ENCODE measurements at regions of chr2 and their contacts with region 1.

Region 1: GRCh38 chr2:200888704-200889625 is at the starts of genes NIF3L1 and PPIL3:
- DNase-seq: peak; percentile 99
- H3K4me3 Mint-ChIP-seq: peak within 1 kb of the TSS; percentile 98
- H3K27ac Mint-ChIP-seq: peak within 1 kb of the TSS; percentile 100
- H3K4me1 Mint-ChIP-seq: peaks cover 44% of the 10 kb centered on the region
- H3K27me3 Mint-ChIP-seq: no peaks in the 10 kb centered on the region
- total RNA-seq, gene NIF3L1: 30.8 to 32.7 TPM
- total RNA-seq, gene PPIL3: 84.0 to 87.9 TPM

Region 2: DNA sequence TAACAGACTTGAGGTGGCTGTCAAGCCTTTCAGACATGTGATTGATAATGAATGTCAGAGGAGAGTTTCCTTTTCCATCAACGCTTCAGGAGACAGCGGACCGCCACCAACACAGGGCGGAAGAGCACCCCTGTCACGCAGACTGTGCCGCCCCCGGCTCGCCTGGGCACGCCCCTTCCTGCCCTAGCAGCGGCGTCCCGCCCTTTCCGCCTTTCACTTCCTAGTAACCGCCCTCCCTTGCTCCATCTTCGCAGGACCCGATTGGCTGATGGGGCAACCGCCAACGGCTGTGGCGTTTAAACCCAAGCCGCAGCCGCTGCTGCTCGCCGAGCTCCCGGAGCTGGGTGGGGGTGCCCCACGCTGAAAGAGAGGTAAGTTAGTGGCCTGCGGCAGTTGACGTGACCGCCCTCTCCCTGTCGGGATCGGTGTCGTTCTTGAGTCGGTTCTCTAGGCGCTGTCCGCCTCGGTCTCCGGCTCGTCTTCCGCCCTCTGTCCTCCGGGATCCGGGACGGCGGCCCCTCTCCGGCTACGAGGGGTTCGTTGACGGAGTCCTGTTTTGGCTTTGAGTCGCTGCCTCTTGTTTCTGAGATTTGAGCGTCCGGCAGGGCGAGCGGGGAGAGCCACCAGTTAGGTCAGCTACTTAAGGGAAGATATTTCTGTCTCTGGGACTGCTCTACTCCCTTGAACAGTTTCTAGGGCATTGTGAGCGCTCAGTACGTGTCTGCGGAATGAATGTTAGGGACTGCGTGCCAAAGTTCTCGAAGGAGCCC is 362.9 kb before region 1 on chr2 and contains the start of gene SGO2:
- CTCF ChIA-PET with region 1: no interaction called
- POLR2A ChIA-PET with region 1: no interaction called
- intact Hi-C with region 1: loop called (anchors 5 kb)
- DNase-seq: peak; percentile 98
- H3K4me3 Mint-ChIP-seq: peak within 1 kb of the TSS; percentile 88
- H3K27ac Mint-ChIP-seq: peak within 1 kb of the TSS; percentile 73
- H3K4me1 Mint-ChIP-seq: peaks cover 20% of the 10 kb centered on the region
- H3K27me3 Mint-ChIP-seq: no peaks in the 10 kb centered on the region
- total RNA-seq, gene SGO2: 40.5 to 40.7 TPM

Region 3: GRCh38 chr2:200864176-200864976 is 24.6 kb before region 1 on chr2 and contains the start of gene CLK1:
- CTCF ChIA-PET with region 1: interaction called, 5 read pairs
- POLR2A ChIA-PET with region 1: interaction called, 54 read pairs
- intact Hi-C with region 1: loop called (anchors 1 kb)
- DNase-seq: peak; percentile 98
- H3K4me3 Mint-ChIP-seq: peak within 1 kb of the TSS; percentile 87
- H3K27ac Mint-ChIP-seq: peak within 1 kb of the TSS; percentile 100
- H3K4me1 Mint-ChIP-seq: peaks cover 36% of the 10 kb centered on the region
- H3K27me3 Mint-ChIP-seq: no peaks in the 10 kb centered on the region
- total RNA-seq, gene CLK1: 112 to 114 TPM

Region 4: DNA sequence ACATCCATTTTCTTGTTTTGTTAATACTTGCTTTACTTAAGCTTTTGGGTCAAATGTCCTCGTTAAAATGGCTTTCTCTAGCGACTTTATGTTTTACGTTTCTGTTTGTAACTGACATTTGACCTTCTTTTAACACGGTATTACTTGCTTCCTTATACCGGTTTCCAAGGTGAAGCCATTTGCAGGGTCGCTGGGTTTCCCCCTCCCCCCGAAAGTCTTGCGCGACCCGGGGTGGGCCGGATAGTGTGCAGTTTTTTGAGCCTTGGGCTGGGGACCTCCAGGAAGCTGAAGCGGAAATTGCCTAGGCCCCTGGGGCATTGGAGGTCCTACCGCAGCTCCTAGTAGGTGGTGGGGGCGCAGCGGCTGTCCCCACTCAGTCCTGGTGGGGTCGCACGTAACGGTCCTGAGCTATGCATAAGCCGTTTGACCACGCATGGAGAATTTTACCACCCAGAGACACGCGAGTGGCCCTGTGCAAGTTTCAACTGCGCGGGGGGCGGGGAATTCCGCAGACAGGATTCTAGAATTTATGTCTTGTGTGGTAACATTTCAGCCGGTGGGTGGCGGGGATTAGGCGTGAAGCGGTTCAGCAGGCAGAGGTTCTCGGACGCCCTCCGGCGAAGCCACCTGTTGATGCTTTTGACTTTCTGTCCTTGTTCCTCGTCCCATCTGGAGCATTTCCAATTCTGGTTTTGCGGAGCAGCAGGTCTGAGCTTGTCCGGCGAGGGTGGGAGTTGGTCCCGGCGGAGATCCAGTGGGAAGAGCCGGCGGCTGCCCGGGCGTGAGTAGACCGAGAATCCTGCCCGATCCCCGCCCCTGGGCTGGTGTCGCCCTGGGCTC is 229.4 kb after region 1 on chr2:
- CTCF ChIA-PET with region 1: no interaction called
- POLR2A ChIA-PET with region 1: interaction called, 12 read pairs
- intact Hi-C with region 1: loop called (anchors 1 kb)
- DNase-seq: peak; percentile 93
- H3K4me3 Mint-ChIP-seq: peak overlapping the region; percentile 99
- H3K27ac Mint-ChIP-seq: peak overlapping the region; percentile 97
- H3K4me1 Mint-ChIP-seq: peaks cover 37% of the 10 kb centered on the region
- H3K27me3 Mint-ChIP-seq: no peaks in the 10 kb centered on the region

Region 5: GRCh38 chr2:201363857-201364560 is 475.0 kb after region 1 on chr2:
- CTCF ChIA-PET with region 1: no interaction called
- POLR2A ChIA-PET with region 1: no interaction called
- intact Hi-C with region 1: loop called (anchors 10 kb)
- DNase-seq: peak; percentile 32
- H3K4me3 Mint-ChIP-seq: no peak overlapping the region
- H3K27ac Mint-ChIP-seq: no peak overlapping the region
- H3K4me1 Mint-ChIP-seq: peaks cover 24% of the 10 kb centered on the region
- H3K27me3 Mint-ChIP-seq: no peaks in the 10 kb centered on the region

Measured in activated CD4-positive, alpha-beta memory T cell treated with anti-CD3 and anti-CD28 coated beads for 36 hours (primary cell).